PC-9 (cell line): ENCODE measurements at regions of chr4 and their contacts with region 1.

Region 1: DNA sequence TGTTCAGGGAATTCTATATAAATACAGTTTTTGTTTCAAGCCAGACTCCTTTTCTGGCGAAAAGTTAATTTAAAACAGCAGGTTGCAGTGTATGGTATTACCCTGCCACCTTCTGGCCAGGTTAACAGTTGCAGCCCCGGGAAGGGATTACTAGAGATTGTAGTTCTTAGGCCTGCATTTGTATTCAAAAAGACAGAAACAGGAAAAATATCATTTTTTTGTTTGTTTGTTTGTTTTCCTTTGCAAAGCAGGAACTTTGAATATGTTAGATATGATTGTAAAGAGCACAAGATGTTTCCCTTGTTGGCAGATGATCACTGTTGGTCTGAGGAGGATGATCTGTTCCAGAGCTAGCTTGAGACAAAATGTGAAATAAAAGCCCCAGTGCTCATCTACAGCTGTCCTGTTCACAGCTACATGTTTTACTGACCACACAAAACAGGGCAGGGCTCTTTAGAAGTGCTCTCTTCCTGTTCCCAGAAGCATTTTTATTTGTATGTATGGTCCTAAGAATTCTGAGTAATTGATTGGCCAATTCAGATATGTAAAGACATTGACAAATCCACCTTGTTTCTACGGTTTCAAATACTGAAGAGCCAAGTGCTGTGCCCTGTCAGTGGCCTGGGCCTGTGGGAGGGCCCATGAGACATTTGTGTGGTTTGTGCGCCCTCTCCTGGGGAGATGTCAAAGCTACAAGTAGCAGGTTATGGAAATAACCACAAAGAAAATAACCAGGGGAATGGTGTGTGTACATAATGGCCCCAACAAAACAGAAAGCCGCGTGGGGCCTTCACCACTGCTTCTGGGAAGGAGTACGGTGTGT is 57.9 kb downstream of the CLDN22 start:
- DNase-seq: peak; percentile 43 to 66
- H3K4me3 ChIP-seq: no peak overlapping the region
- H3K27ac ChIP-seq: no peak overlapping the region
- H3K4me1 ChIP-seq: no peaks in the 10 kb centered on the region
- H3K27me3 ChIP-seq: no peaks in the 10 kb centered on the region
- CTCF ChIP-seq: peak; percentile 72

Region 2: DNA sequence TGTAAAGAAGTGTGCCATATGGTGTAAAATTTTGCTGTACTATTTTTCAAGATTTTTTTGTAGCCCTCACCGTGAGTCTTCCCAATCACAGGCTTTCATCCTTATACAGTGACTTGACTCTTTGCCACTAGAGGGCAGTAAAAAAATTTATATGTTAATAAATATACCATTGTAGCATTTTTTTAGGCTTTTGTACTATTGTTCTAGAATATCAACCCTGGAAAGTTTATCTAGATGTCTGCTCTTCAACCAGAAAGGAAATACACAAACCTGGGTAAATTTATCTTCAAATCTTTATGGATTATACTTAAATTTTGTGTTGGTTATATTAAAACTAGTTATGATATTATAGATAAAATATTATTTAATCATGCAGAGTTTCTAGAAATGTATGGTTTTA is 783.7 kb before region 1 on chr4:
- CTCF ChIA-PET with region 1: no interaction called
- POLR2A ChIA-PET with region 1: no interaction called
- intact Hi-C with region 1: loop called (anchors 5 kb)
- DNase-seq: no peak
- H3K4me3 ChIP-seq: no peak overlapping the region
- H3K27ac ChIP-seq: no peak overlapping the region
- H3K4me1 ChIP-seq: no peaks in the 10 kb centered on the region
- H3K27me3 ChIP-seq: no peaks in the 10 kb centered on the region
- CTCF ChIP-seq: peak; percentile 67

Region 3: GRCh38 chr4:182938205-182938645 is 323.9 kb before region 1 on chr4:
- CTCF ChIA-PET with region 1: interaction called, 6 read pairs
- POLR2A ChIA-PET with region 1: no interaction called
- intact Hi-C with region 1: loop called (anchors 1 kb)
- DNase-seq: peak in 1 of 2 experiments; percentile 76
- H3K4me3 ChIP-seq: no peak overlapping the region
- H3K27ac ChIP-seq: no peak overlapping the region
- H3K4me1 ChIP-seq: no peaks in the 10 kb centered on the region
- H3K27me3 ChIP-seq: peaks cover 4% of the 10 kb centered on the region; the same call in 1 of the 2 replicates
- CTCF ChIP-seq: peak; percentile 88

Region 4: DNA sequence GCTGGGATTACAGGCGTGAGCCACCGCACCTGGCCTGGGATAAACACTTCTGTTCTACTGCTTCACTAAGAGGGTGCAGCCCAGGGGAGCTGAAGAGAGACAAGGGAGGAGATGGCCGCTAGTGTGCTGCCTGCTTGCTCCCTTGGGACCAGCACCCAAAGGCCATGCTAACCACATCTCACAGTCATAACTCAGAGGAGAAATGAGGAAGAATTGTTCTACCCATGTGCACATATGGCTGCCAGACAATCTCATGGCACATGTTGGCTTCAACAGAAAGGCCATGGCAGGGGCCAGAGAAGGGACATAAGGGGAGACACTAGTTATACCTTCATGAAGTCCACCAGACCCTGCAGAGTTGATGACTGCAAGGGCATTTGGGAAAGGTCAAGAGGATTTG is 35.5 kb after region 1 on chr4:
- CTCF ChIA-PET with region 1: no interaction called
- POLR2A ChIA-PET with region 1: no interaction called
- intact Hi-C with region 1: no loop called
- DNase-seq: no peak
- H3K4me3 ChIP-seq: no peak overlapping the region
- H3K27ac ChIP-seq: no peak overlapping the region
- H3K4me1 ChIP-seq: no peaks in the 10 kb centered on the region
- H3K27me3 ChIP-seq: no peaks in the 10 kb centered on the region
- CTCF ChIP-seq: no peak